AG04449 (cell line): ENCODE measurements at regions of chr6 and their contacts with region 1.

Region 1: GRCh38 chr6:44074439-44075136 is 52.7 kb downstream of the MRPL14 start:
- DNase-seq: no peak
- H3K4me3 ChIP-seq: no peak overlapping the region
- CTCF ChIP-seq: peak; percentile 92

Region 2: GRCh38 chr6:43608310-43608763 is 466.3 kb before region 1 on chr6:
- CTCF ChIA-PET with region 1: interaction called, 74 read pairs
- POLR2A ChIA-PET with region 1: no interaction called
- DNase-seq: no peak
- H3K4me3 ChIP-seq: no peak overlapping the region
- CTCF ChIP-seq: peak; percentile 72

Region 3: GRCh38 chr6:43723737-43724295 is 350.8 kb before region 1 on chr6:
- CTCF ChIA-PET with region 1: interaction called, 187 read pairs
- POLR2A ChIA-PET with region 1: no interaction called
- DNase-seq: no peak
- H3K4me3 ChIP-seq: no peak overlapping the region
- CTCF ChIP-seq: peak; percentile 65

Region 4: GRCh38 chr6:43790025-43790523 is 284.5 kb before region 1 on chr6:
- CTCF ChIA-PET with region 1: interaction called, 12 read pairs
- POLR2A ChIA-PET with region 1: interaction called, 4 read pairs
- DNase-seq: no peak
- H3K4me3 ChIP-seq: no peak overlapping the region
- CTCF ChIP-seq: no peak

Region 5: DNA sequence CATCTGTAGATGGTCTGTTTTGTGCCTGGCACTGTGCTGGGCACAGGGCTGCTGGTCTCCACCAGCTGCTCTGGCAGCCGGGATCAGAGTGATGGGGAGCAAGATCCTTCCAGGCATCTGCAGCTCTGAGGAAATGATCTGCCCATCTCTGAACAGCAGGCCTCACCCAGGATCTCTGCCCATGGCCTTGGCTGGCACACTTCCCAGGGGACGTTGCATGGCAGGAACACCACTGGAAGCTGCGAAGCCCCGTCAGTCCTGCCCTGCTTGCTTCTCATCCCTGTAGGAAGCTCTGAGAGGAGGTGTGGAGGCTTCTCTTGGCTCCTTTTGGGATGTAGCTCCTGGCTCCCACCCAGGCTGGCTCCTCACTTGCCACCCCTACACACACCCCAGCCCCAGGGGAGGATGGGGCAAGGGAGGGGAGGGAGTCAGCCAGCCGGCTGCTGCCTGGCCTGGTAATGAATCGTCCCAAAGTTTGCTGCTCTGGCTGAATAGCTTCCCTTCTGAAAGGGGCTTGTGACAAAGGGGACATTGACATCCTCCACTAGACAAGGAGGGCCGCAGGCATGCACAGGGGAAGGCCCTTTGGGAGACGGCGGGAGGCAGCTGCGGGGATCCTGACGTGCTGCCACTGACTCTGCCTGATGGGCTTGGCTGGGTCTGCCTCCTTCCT is 195.6 kb before region 1 on chr6:
- CTCF ChIA-PET with region 1: no interaction called
- POLR2A ChIA-PET with region 1: no interaction called
- DNase-seq: no peak
- H3K4me3 ChIP-seq: no peak overlapping the region
- CTCF ChIP-seq: no peak

Region 6: GRCh38 chr6:43926634-43927524 is 147.7 kb before region 1 on chr6:
- CTCF ChIA-PET with region 1: interaction called, 28 read pairs
- POLR2A ChIA-PET with region 1: no interaction called
- DNase-seq: peak; percentile 81
- H3K4me3 ChIP-seq: no peak overlapping the region
- CTCF ChIP-seq: no peak

Region 7: DNA sequence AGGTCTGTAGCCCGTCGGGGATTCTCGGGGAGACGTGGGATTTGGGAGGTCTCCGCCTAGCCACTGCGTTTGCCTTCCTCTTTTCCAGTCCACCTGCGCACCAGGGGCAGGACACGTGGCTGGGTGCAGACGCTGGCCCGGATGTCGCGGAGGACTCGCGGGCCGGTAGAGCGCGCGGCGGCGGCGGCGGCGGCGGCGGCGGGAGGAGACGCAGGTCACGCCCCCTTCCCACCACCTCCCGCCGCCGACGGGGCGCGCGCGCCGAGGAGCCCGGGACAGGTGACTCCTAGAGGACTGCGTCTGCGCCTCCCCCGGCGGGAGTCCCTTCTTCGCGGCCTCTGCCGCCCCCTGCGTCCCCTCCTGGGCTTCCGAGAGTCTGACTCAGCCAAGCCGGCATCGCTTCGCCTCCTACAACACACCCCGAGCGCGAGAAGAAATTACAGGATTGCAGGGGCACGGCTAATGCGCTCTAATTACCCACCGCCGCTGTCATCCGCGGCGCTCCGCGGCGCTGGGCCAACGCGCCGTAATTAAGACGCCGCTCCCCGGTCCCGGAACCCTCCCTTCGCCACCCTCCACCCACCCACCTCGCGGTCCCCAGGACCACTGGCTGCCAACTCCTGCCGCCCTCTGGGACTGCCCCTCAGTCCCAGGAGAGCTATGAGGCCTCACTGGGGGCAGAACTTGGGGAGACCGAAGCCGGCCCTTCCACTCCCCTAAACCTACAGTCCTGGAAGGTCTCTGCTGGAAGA is 71.8 kb before region 1 on chr6:
- CTCF ChIA-PET with region 1: interaction called, 69 read pairs
- POLR2A ChIA-PET with region 1: interaction called, 3 read pairs
- DNase-seq: no peak
- H3K4me3 ChIP-seq: peak overlapping the region; percentile 50
- CTCF ChIP-seq: peak; percentile 41

Region 8: GRCh38 chr6:44058617-44059358 is 15.8 kb before region 1 on chr6:
- CTCF ChIA-PET with region 1: interaction called, 46 read pairs
- POLR2A ChIA-PET with region 1: interaction called, 8 read pairs
- DNase-seq: peak; percentile 99
- H3K4me3 ChIP-seq: no peak overlapping the region
- CTCF ChIP-seq: no peak